ENCODE measurements at regions of chr13 and their contacts with region 1.

Region 1: DNA sequence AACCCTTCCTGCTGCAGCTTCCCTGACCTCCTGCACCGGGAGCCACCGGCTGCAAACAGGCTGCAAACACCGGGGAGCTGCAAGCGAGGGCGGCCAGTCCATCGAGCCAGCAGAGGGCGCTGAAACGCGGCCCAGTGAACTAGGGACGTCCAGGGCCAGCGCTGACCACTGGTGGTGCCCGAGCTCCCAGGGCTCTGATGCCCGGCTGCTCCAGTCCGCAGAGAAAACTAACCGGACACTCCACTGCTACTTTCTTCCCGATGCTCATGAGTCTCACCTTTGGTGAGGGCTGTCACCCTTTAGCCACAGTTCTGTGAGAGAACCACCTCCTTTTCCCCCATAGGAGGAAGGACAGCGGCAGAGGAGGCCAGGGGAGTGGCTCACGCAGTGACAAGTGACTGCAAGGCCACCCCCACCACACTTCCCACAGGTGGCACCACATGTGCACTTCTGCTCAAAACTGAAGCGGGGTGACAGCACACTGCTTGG is 82.8 kb upstream of the MTIF3 start:
- DNase-seq: peak; percentile 92
- H3K4me3 ChIP-seq: peak overlapping the region in 1 of 4 donors; percentile 22
- H3K27ac ChIP-seq: no peak overlapping the region
- H3K4me1 ChIP-seq: peaks cover 0 to 19% (median 16%) of the 10 kb centered on the region in 4 donors
- H3K27me3 ChIP-seq: peaks cover 0 to under 1% (median 0%) of the 10 kb centered on the region in 4 donors
- CTCF ChIP-seq: peak; percentile 78 to 95 (median 89)
- EP300 ChIP-seq: no peak
- POLR2A ChIP-seq: no peak

Region 2: DNA sequence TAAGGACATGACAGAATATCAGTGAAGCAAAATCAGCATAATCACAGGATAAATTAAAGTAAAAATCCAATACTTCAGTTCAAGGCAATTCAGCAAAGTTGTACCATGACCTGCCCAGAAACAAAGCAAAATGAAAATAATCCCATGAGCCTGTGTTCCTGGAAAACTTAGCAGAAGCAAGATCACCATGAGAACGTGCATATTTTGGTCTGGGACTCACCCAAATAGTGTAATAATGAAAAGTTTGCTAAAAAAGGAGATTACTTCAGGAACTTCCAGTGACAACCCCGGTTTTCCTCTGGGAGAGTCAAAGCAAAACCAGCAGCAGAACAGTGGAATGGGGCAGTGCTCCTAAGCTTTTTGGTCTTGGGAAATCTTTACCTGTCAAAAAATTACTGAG is 296.7 kb before region 1 on chr13:
- intact Hi-C with region 1: no loop called
- DNase-seq: no peak
- H3K4me3 ChIP-seq: no peak overlapping the region
- H3K27ac ChIP-seq: no peak overlapping the region
- H3K4me1 ChIP-seq: no peaks in the 10 kb centered on the region
- H3K27me3 ChIP-seq: no peaks in the 10 kb centered on the region
- CTCF ChIP-seq: no peak
- EP300 ChIP-seq: no peak
- POLR2A ChIP-seq: no peak

Region 3: GRCh38 chr13:27374650-27375049 is 158.5 kb before region 1 on chr13:
- intact Hi-C with region 1: loop called (anchors 5 kb)
- DNase-seq: no peak
- H3K4me3 ChIP-seq: no peak overlapping the region
- H3K27ac ChIP-seq: no peak overlapping the region
- H3K4me1 ChIP-seq: peaks cover 0 to 16% (median 7%) of the 10 kb centered on the region in 4 donors
- H3K27me3 ChIP-seq: peaks cover 0 to 34% (median 0%) of the 10 kb centered on the region in 4 donors
- CTCF ChIP-seq: peak; percentile 73 to 77 (median 76)
- EP300 ChIP-seq: no peak
- POLR2A ChIP-seq: no peak

Region 4: GRCh38 chr13:27980280-27980998 is 447.2 kb after region 1 on chr13:
- intact Hi-C with region 1: loop called (anchors 10 kb)
- DNase-seq: no peak
- H3K4me3 ChIP-seq: peak overlapping the region in 1 of 4 donors; percentile 22
- H3K27ac ChIP-seq: no peak overlapping the region
- H3K4me1 ChIP-seq: peaks cover 9 to 44% (median 37%) of the 10 kb centered on the region in 4 donors
- H3K27me3 ChIP-seq: peaks cover 0 to 97% (median 65%) of the 10 kb centered on the region in 4 donors
- CTCF ChIP-seq: no peak
- EP300 ChIP-seq: no peak
- POLR2A ChIP-seq: no peak

Region 5: GRCh38 chr13:28671126-28671792 is 1138.1 kb after region 1 on chr13:
- intact Hi-C with region 1: no loop called
- DNase-seq: no peak
- H3K4me3 ChIP-seq: no peak overlapping the region
- H3K27ac ChIP-seq: no peak overlapping the region
- H3K4me1 ChIP-seq: no peaks in the 10 kb centered on the region
- H3K27me3 ChIP-seq: no peaks in the 10 kb centered on the region
- CTCF ChIP-seq: no peak
- EP300 ChIP-seq: no peak
- POLR2A ChIP-seq: no peak